ENCODE measurements at regions of chr5 and their contacts with region 1.

Region 1: DNA sequence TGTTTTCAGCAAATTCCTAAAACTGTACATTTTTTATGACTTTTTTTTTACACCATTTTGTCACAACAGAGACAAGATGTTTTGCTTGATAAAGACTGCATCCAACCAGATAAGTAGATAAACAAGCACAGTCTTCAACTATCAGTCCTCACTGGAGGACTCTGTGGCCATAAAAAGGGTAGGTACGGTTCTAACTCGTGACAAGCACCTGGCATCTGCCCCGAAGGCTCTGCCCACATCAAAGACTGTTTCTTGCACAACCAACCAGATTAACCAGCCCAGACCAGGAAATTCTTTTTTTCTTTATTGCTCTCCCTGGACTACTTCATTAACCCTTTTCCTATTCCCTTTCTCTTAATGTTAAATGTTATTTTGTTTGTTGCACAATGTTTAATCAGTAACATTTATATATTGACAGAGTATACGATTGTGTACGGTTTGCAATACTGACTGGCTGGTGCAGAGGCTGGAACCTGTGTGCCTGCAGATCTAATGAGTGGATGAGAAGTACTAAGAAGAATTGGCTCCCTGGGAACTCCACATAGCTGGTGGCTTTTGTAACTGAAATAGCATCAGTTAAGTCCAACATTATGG is 74.1 kb downstream of the SERINC5 start:
- DNase-seq: peak in 7 of 9 donors; percentile 57 to 70 (median 68)
- ATAC-seq: peak; percentile 79
- H3K4me3 ChIP-seq: no peak overlapping the region
- H3K4me3 Mint-ChIP-seq: peak overlapping the region; percentile 54 to 100 (median 78)
- H3K27ac ChIP-seq: peak overlapping the region; percentile 79
- H3K27ac Mint-ChIP-seq: peak overlapping the region; percentile 74 to 99 (median 97)
- H3K4me1 ChIP-seq: peaks cover 57 to 95% of the 10 kb centered on the region in 2 donors
- H3K4me1 Mint-ChIP-seq: peaks cover 65 to 96% (median 89%) of the 10 kb centered on the region in 7 donors
- H3K27me3 ChIP-seq: no peaks in the 10 kb centered on the region
- H3K27me3 Mint-ChIP-seq: no peaks in the 10 kb centered on the region

Region 2: DNA sequence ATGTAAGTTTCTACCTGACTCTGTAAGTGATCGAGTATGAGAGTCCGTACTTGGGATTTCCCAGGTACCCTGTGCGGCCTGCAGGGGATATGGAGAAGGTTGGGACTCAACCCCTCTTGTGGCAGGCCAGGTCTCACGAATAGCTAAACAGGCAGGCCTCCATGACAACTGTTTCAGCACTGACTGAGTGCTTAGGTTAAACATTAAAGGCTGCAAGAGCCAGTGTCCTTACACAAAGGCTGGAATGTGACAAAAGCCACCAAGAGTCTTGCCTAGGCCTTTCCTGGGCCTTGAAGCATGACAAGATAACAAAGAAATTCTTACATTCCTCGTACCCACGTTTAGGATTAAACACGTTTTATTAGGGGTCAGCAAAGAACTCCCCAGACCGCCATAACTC is 87.9 kb before region 1 on chr5:
- CTCF ChIA-PET with region 1: interaction called, 7 read pairs
- POLR2A ChIA-PET with region 1: interaction called, 5 read pairs
- intact Hi-C with region 1: loop called in 1 of 2 experiments (anchors 2 kb)
- DNase-seq: no peak
- ATAC-seq: no peak
- H3K4me3 ChIP-seq: no peak overlapping the region
- H3K4me3 Mint-ChIP-seq: peak overlapping the region in 2 of 10 donors; percentile 3 to 5
- H3K27ac ChIP-seq: no peak overlapping the region
- H3K27ac Mint-ChIP-seq: peak overlapping the region in 3 of 9 donors; percentile 9 to 62 (median 54)
- H3K4me1 ChIP-seq: peaks cover 0 to 18% of the 10 kb centered on the region in 2 donors
- H3K4me1 Mint-ChIP-seq: peaks cover 15 to 53% (median 47%) of the 10 kb centered on the region in 7 donors
- H3K27me3 ChIP-seq: no peaks in the 10 kb centered on the region
- H3K27me3 Mint-ChIP-seq: peaks cover 0 to 4% (median 0%) of the 10 kb centered on the region in 5 donors

Region 3: DNA sequence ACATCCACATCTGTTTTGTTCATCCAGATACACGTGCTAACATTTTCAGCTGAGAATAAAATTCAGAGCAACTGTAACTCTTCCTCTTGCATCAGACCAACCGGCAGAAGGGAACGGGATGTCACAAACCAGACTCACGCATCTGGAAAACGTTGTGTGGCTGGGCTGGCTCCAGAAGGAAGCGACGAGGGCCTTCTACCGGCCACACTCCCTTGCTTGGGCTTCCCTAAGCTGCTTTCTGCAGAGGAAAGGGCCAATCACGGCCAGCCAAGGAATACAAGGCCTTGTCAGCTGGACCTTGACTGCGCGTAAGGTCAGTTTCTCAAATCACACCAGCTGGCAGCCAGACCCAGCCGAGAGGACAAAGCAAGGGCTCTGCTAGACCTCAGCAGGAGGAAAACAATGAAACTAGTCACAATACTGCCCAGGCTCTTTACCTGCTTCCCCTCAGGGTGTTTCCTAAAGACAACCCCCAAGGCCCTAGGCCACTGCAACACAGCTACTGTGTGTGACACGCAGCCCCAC is 40.5 kb before region 1 on chr5:
- CTCF ChIA-PET with region 1: no interaction called
- POLR2A ChIA-PET with region 1: interaction called, 17 read pairs
- intact Hi-C with region 1: loop called (anchors 1 to 2 kb)
- DNase-seq: peak in 1 of 9 donors; percentile 18
- ATAC-seq: no peak
- H3K4me3 ChIP-seq: no peak overlapping the region
- H3K4me3 Mint-ChIP-seq: peak overlapping the region in 9 of 10 donors; percentile 27 to 66 (median 47)
- H3K27ac ChIP-seq: peak overlapping the region; percentile 64
- H3K27ac Mint-ChIP-seq: peak overlapping the region; percentile 83 to 95 (median 89)
- H3K4me1 ChIP-seq: peaks cover 37 to 75% of the 10 kb centered on the region in 2 donors
- H3K4me1 Mint-ChIP-seq: peaks cover 58 to 99% (median 75%) of the 10 kb centered on the region in 7 donors
- H3K27me3 ChIP-seq: no peaks in the 10 kb centered on the region
- H3K27me3 Mint-ChIP-seq: no peaks in the 10 kb centered on the region

Region 4: GRCh38 chr5:80165452-80165851 is 16.3 kb before region 1 on chr5:
- CTCF ChIA-PET with region 1: interaction called, 3 read pairs
- POLR2A ChIA-PET with region 1: interaction called, 13 read pairs
- intact Hi-C with region 1: loop called in 1 of 2 experiments (anchors 1 kb)
- DNase-seq: no peak
- ATAC-seq: no peak
- H3K4me3 ChIP-seq: no peak overlapping the region
- H3K4me3 Mint-ChIP-seq: peak overlapping the region in 4 of 10 donors; percentile 8 to 38 (median 14)
- H3K27ac ChIP-seq: peak overlapping the region; percentile 42
- H3K27ac Mint-ChIP-seq: peak overlapping the region in 8 of 9 donors; percentile 55 to 93 (median 76)
- H3K4me1 ChIP-seq: peaks cover 6 to 24% of the 10 kb centered on the region in 2 donors
- H3K4me1 Mint-ChIP-seq: peaks cover 17 to 90% (median 62%) of the 10 kb centered on the region in 7 donors
- H3K27me3 ChIP-seq: no peaks in the 10 kb centered on the region
- H3K27me3 Mint-ChIP-seq: no peaks in the 10 kb centered on the region

Region 5: GRCh38 chr5:80216753-80217596 is 35.3 kb after region 1 on chr5:
- CTCF ChIA-PET with region 1: interaction called, 4 read pairs
- POLR2A ChIA-PET with region 1: interaction called, 8 read pairs
- intact Hi-C with region 1: loop called in 1 of 2 experiments (anchors 5 kb)
- DNase-seq: peak in 1 of 9 donors; percentile 58
- ATAC-seq: no peak
- H3K4me3 ChIP-seq: peak overlapping the region; percentile 35
- H3K4me3 Mint-ChIP-seq: peak overlapping the region; percentile 45 to 89 (median 81)
- H3K27ac ChIP-seq: peak overlapping the region; percentile 63
- H3K27ac Mint-ChIP-seq: peak overlapping the region in 8 of 9 donors; percentile 83 to 99 (median 93)
- H3K4me1 ChIP-seq: peaks cover 15 to 87% of the 10 kb centered on the region in 2 donors
- H3K4me1 Mint-ChIP-seq: peaks cover 57 to 100% (median 91%) of the 10 kb centered on the region in 7 donors
- H3K27me3 ChIP-seq: no peaks in the 10 kb centered on the region
- H3K27me3 Mint-ChIP-seq: no peaks in the 10 kb centered on the region

Region 6: DNA sequence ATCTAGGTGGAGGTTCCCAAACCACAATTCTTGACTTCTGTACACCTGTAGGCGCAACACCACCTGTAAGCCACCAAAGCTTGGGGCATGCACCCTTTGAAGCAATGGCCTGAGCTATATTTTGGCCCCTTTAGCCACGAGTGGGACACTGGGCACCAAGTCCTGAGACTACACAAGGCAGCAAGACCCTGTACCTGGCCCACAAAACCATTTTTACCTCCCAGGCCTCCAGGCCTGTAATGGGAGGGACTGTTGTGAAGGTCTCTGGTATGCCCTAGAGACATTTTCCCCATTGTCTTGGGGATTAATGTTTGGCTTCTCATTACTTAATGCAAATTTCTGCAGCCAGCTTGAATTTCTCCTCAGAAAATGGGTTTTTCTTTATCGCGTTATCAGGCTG is 281.6 kb after region 1 on chr5:
- CTCF ChIA-PET with region 1: no interaction called
- POLR2A ChIA-PET with region 1: no interaction called
- intact Hi-C with region 1: no loop called
- DNase-seq: no peak
- ATAC-seq: no peak
- H3K4me3 ChIP-seq: no peak overlapping the region
- H3K4me3 Mint-ChIP-seq: no peak overlapping the region
- H3K27ac ChIP-seq: no peak overlapping the region
- H3K27ac Mint-ChIP-seq: no peak overlapping the region
- H3K4me1 ChIP-seq: no peaks in the 10 kb centered on the region
- H3K4me1 Mint-ChIP-seq: no peaks in the 10 kb centered on the region
- H3K27me3 ChIP-seq: no peaks in the 10 kb centered on the region
- H3K27me3 Mint-ChIP-seq: no peaks in the 10 kb centered on the region

Region 7: GRCh38 chr5:80754900-80755299 is 573.2 kb after region 1 on chr5:
- CTCF ChIA-PET with region 1: no interaction called
- POLR2A ChIA-PET with region 1: no interaction called
- intact Hi-C with region 1: loop called in 1 of 2 experiments (anchors 5 kb)
- DNase-seq: peak in 2 of 9 donors; percentile 11 to 49
- ATAC-seq: no peak
- H3K4me3 ChIP-seq: peak overlapping the region; percentile 7
- H3K4me3 Mint-ChIP-seq: peak overlapping the region; percentile 49 to 87 (median 78)
- H3K27ac ChIP-seq: peak overlapping the region; percentile 57
- H3K27ac Mint-ChIP-seq: peak overlapping the region; percentile 45 to 93 (median 79)
- H3K4me1 ChIP-seq: peaks cover 20 to 28% of the 10 kb centered on the region in 2 donors
- H3K4me1 Mint-ChIP-seq: peaks cover 30 to 61% (median 47%) of the 10 kb centered on the region in 7 donors
- H3K27me3 ChIP-seq: no peaks in the 10 kb centered on the region
- H3K27me3 Mint-ChIP-seq: no peaks in the 10 kb centered on the region